ENCODE measurements at regions of chrX and their contacts with region 1.

Region 1: GRCh38 chrX:107654872-107655761 is 26.8 kb downstream of the PRPS1 start:
- DNase-seq: peak; percentile 72
- H3K4me3 Mint-ChIP-seq: no peak overlapping the region
- H3K27ac Mint-ChIP-seq: no peak overlapping the region
- H3K4me1 Mint-ChIP-seq: peaks cover 15% of the 10 kb centered on the region
- H3K27me3 Mint-ChIP-seq: no peaks in the 10 kb centered on the region

Region 2: GRCh38 chrX:107537815-107538214 is 117.3 kb before region 1 on chrX:
- CTCF ChIA-PET with region 1: interaction called, 4 read pairs
- intact Hi-C with region 1: loop called (anchors 1 kb)
- DNase-seq: peak; percentile 68
- H3K4me3 Mint-ChIP-seq: no peak overlapping the region
- H3K27ac Mint-ChIP-seq: no peak overlapping the region
- H3K4me1 Mint-ChIP-seq: no peaks in the 10 kb centered on the region
- H3K27me3 Mint-ChIP-seq: peaks cover 3% of the 10 kb centered on the region

Region 3: DNA sequence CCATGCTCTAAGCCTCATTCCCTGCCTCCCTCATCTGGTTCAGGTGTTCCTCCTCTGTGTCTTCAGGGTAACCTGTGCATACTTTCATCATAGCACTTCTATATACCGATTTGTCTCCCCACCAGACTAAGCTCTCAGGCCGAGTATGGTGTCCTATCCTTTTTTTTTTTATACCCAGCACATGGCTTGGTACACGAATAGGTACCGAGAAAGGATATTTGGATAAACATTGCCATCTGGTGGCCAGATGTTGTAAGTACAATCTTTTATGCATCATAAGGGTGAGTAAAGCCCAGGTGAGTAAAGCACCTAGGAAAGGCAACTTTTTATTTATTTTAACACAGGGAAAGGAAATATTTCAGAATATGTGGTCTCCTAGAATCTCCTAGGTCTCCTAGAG is 238.9 kb after region 1 on chrX:
- CTCF ChIA-PET with region 1: interaction called, 12 read pairs
- intact Hi-C with region 1: loop called (anchors 1 kb)
- DNase-seq: peak; percentile 22
- H3K4me3 Mint-ChIP-seq: no peak overlapping the region
- H3K27ac Mint-ChIP-seq: no peak overlapping the region
- H3K4me1 Mint-ChIP-seq: no peaks in the 10 kb centered on the region
- H3K27me3 Mint-ChIP-seq: no peaks in the 10 kb centered on the region

Region 4: GRCh38 chrX:108001174-108001814 is 346.2 kb after region 1 on chrX:
- CTCF ChIA-PET with region 1: no interaction called
- intact Hi-C with region 1: loop called (anchors 1 kb)
- DNase-seq: peak; percentile 37
- H3K4me3 Mint-ChIP-seq: no peak overlapping the region
- H3K27ac Mint-ChIP-seq: peak overlapping the region; percentile 30
- H3K4me1 Mint-ChIP-seq: peaks cover 5% of the 10 kb centered on the region
- H3K27me3 Mint-ChIP-seq: no peaks in the 10 kb centered on the region